PC-9 (cell line): ENCODE measurements at regions of chr11 and their contacts with region 1.

Region 1: GRCh38 chr11:662689-663274 is 25.7 kb downstream of the DRD4 start:
- DNase-seq: peak in 1 of 2 experiments; percentile 44
- H3K4me3 ChIP-seq: no peak overlapping the region
- H3K27ac ChIP-seq: no peak overlapping the region
- H3K4me1 ChIP-seq: no peaks in the 10 kb centered on the region
- H3K27me3 ChIP-seq: no peaks in the 10 kb centered on the region
- CTCF ChIP-seq: peak; percentile 74

Region 2: GRCh38 chr11:554824-555472 is 107.8 kb before region 1 on chr11:
- CTCF ChIA-PET with region 1: no interaction called
- POLR2A ChIA-PET with region 1: no interaction called
- intact Hi-C with region 1: no loop called
- DNase-seq: peak in 1 of 2 experiments; percentile 54
- H3K4me3 ChIP-seq: no peak overlapping the region
- H3K27ac ChIP-seq: no peak overlapping the region
- H3K4me1 ChIP-seq: no peaks in the 10 kb centered on the region
- H3K27me3 ChIP-seq: no peaks in the 10 kb centered on the region
- CTCF ChIP-seq: peak; percentile 48; the same call in 1 of the 2 replicates

Region 3: DNA sequence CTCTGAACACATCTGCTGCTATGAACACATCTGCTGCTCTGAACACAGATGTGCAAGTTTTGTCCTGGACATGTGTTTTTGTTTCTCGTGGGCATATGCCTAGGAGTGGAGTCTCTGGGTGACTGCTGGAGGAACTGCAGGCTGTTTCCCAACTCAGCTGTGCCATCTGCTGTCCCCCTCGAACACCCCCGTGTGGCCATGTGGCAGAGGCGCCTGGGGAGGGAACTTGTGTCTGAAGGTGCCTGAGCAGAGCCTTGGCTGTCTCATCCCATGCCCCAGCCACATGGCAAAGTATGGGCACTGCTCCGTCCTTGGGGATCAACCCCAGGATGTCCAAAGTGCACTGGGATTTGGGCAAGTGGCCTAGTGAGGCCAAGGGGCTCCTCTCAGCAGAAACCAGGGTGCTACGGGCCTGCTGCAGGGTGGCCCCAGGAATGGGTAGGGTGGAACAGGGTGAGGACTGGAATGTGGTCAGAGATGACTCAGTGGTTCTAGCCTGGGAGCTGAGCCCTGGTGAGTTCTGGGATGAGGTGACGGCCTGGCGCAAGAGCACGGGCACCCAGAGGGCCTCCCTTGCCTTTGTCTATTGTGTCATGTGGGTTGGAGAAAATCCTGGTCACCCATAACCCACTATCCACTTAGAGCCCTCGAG is 99.8 kb after region 1 on chr11:
- CTCF ChIA-PET with region 1: no interaction called
- POLR2A ChIA-PET with region 1: no interaction called
- intact Hi-C with region 1: loop called (anchors 5 kb)
- DNase-seq: peak; percentile 83 to 93
- H3K4me3 ChIP-seq: peak overlapping the region; percentile 28; the same call in 1 of the 2 replicates
- H3K27ac ChIP-seq: peak overlapping the region; percentile 90
- H3K4me1 ChIP-seq: peaks cover 30% of the 10 kb centered on the region
- H3K27me3 ChIP-seq: no peaks in the 10 kb centered on the region
- CTCF ChIP-seq: peak; percentile 50; the same call in 1 of the 2 replicates